Mammary epithelial cell (primary cell): ENCODE measurements at regions of chr17 and their contacts with region 1.

Region 1: DNA sequence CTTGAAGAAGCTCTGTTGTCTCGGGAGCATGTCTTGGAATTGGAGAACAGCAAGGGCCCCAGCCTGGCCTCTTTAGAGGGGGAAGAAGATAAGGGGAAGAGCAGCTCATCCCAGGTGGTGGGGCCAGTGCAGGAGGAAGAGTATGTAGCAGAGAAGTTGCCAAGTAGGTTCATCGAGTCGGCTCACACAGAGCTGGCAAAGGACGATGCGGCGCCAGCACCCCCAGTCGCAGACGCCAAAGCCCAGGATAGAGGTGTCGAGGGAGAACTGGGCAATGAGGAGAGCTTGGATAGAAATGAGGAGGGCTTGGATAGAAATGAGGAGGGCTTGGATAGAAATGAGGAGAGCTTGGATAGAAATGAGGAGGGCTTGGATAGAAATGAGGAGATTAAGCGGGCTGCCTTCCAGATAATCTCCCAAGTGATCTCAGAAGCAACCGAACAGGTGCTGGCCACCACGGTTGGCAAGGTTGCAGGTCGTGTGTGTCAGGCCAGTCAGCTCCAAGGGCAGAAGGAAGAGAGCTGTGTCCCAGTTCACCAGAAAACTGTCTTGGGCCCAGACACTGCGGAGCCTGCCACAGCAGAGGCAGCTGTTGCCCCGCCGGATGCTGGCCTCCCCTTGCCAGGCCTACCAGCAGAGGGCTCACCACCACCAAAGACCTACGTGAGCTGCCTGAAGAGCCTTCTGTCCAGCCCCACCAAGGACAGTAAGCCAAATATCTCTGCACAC is 21.2 kb downstream of the AKAP1 start:
- DNase-seq: no peak
- H3K4me3 ChIP-seq: no peak overlapping the region
- H3K27ac ChIP-seq: no peak overlapping the region
- H3K4me1 ChIP-seq: peaks cover 54% of the 10 kb centered on the region
- H3K27me3 ChIP-seq: no peaks in the 10 kb centered on the region
- CTCF ChIP-seq: peak in 1 of 2 donors; percentile 29

Region 2: DNA sequence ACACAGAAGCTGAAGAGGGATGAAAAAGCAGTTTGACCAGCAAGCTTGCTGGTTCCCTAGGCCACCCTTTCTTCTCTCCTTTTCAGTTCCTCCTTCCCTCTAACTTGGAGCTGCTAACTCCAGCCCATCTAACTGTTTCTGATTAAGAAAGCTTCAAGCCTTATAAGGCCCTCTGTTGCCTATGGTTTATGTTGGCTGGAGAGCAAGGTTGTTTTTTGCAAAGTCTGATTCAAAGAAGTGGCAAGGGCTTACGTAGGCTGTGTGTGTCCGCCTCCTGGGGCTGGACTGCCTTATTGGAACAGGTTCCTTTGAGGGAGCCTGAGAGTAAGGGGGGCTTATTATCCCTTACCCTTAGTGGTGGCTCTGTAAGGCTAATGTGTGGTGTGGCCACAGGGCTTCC is 14.1 kb before region 1 on chr17:
- CTCF ChIA-PET with region 1: no interaction called
- dilution Hi-C with region 1: no loop called
- in situ Hi-C with region 1: no loop called
- intact Hi-C with region 1: loop called (anchors 2 kb)
- DNase-seq: no peak
- H3K4me3 ChIP-seq: no peak overlapping the region
- H3K27ac ChIP-seq: no peak overlapping the region
- H3K4me1 ChIP-seq: peaks cover 27% of the 10 kb centered on the region
- H3K27me3 ChIP-seq: no peaks in the 10 kb centered on the region
- CTCF ChIP-seq: no peak

Region 3: DNA sequence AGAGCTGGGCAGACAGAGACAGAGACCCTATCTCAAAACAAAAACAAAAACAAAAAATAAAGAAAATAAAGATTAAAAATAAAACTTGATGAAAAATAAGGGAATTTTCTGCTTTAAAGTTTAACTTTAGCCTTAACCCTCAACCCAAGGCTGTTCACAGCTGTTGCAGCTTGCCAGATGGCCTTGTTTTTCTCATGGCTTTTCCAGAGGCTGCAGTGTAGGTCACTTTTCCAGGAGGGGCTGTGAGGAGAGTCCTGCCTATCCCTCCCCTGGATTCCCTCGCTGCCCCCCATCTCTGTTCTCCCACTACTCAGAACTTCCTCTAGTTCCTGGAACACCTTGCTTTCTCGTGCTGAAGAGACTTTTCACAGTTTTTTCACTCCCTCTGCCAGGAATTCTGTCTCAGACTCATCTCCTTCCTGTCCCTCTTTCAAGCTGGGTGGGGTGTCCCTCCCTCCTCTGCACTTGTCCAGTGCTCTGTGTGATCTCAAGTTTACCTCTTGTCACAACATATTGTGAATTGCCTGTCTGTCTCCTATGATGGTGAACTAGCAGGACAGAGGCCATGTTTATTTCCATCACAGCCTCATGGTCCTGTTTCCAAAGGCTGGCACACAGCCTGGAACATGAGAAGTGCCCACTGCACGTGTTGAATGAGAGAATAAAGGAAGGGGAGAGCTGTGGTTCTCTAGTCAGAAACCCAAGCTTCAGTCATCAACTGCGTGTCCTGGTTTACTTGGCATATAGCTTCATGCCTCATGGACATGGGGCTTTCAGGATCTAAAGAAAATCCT is 80.2 kb after region 1 on chr17:
- CTCF ChIA-PET with region 1: no interaction called
- dilution Hi-C with region 1: no loop called
- in situ Hi-C with region 1: no loop called
- intact Hi-C with region 1: no loop called
- DNase-seq: no peak
- H3K4me3 ChIP-seq: no peak overlapping the region
- H3K27ac ChIP-seq: no peak overlapping the region
- H3K4me1 ChIP-seq: no peaks in the 10 kb centered on the region
- H3K27me3 ChIP-seq: no peaks in the 10 kb centered on the region
- CTCF ChIP-seq: no peak